ENCODE measurements at regions of chr10 and their contacts with region 1.

Region 1: DNA sequence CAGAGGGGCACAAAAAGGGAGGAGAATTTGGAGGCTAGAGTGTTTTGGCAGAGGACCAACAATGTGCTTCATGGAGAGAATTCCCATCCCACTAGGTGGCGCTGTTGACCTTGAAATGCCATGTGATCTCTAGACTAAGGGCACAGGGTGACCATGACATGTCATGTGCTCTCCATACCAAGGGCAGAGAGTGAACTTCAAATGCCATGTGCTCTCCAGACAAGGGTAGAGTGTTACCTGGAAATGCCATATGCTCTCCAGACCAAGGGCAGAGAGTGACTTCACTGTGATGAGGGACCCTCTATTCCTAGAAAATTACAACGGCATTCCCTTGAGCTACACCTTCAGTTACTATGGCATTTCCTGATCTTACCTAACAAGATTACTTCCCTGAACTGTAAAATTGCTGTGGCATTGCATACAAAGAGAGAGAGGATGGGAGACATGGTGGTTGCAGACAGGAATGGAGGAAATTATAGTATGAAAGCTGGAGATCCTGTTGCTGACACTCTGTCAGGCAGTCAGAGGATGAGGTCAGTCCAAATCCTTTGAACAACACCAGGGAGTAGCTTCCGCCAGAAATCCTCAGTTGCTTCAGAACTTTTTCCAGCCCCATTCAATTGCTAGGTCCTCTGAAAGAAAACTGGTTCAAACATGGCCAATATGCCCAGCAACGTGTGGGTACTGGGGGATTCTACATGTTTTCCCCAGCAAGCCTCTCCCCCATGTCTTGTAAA is 60.9 kb upstream of the ACSM6 start:
- DNase-seq: peak; percentile 45
- ATAC-seq: peak; percentile 99
- H3K4me3 ChIP-seq: no peak overlapping the region
- H3K27ac ChIP-seq: no peak overlapping the region
- H3K4me1 ChIP-seq: no peaks in the 10 kb centered on the region
- H3K27me3 ChIP-seq: no peaks in the 10 kb centered on the region
- CTCF ChIP-seq: peak; percentile 71 to 83 (median 79)
- EP300 ChIP-seq: no peak
- POLR2A ChIP-seq: no peak
- RAD21 ChIP-seq: peak; percentile 86

Region 2: GRCh38 chr10:94500063-94500462 is 633.1 kb before region 1 on chr10:
- CTCF ChIA-PET with region 1: no interaction called
- POLR2A ChIA-PET with region 1: no interaction called
- RAD21 ChIA-PET with region 1: no interaction called
- SMC1A ChIA-PET with region 1: no interaction called
- in situ Hi-C with region 1: no loop called
- intact Hi-C with region 1: no loop called
- DNase-seq: no peak
- ATAC-seq: no peak
- H3K4me3 ChIP-seq: no peak overlapping the region
- H3K27ac ChIP-seq: no peak overlapping the region
- H3K4me1 ChIP-seq: peaks cover 6% of the 10 kb centered on the region
- H3K27me3 ChIP-seq: no peaks in the 10 kb centered on the region
- CTCF ChIP-seq: peak in 2 of 3 experiments; percentile 7 to 20; a peak in 1 of 6 replicates
- EP300 ChIP-seq: no peak
- POLR2A ChIP-seq: no peak
- RAD21 ChIP-seq: 0 out of 2 replicates have a peak, but pooled peaks have one; percentile 18

Region 3: DNA sequence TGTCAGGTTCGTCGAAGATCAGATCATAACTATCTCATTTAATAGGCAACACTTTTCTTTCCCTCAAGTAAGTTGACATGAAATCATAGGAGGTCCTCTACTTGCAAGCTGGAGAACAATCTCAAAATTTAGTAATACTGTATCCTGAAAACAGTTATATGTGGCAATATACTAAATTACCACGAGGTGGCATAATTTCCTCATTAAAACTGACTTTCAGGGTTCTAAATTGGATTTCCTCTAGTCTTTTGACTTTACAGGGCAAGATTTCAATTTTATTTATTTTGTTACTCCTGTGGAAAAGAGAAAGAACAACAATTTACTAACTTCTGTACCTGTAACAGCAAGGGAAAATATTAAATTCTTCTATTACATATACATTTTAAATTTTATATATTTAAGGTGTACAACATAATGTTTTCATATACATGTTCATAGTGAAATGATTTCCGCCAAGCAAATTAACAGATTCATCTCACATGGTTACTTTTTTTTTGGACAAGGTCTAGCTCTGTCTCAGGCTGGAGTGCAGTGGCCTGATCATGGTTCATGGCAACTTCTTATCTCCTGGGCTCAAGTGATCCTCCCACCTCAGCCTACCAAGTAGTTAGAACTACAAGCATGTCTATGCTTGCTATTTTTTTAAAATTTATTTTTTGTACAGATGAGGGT is 503.0 kb before region 1 on chr10:
- CTCF ChIA-PET with region 1: no interaction called
- POLR2A ChIA-PET with region 1: no interaction called
- RAD21 ChIA-PET with region 1: interaction called, 4 read pairs
- SMC1A ChIA-PET with region 1: interaction called, 5 read pairs
- in situ Hi-C with region 1: no loop called
- intact Hi-C with region 1: loop called (anchors 2 kb)
- DNase-seq: no peak
- ATAC-seq: peak; percentile 70
- H3K4me3 ChIP-seq: no peak overlapping the region
- H3K27ac ChIP-seq: no peak overlapping the region
- H3K4me1 ChIP-seq: no peaks in the 10 kb centered on the region
- H3K27me3 ChIP-seq: no peaks in the 10 kb centered on the region
- CTCF ChIP-seq: peak; percentile 27 to 61 (median 45); a peak in 4 of 6 replicates
- EP300 ChIP-seq: no peak
- POLR2A ChIP-seq: no peak
- RAD21 ChIP-seq: peak; percentile 64

Region 4: GRCh38 chr10:95183271-95184230 is 50.4 kb after region 1 on chr10:
- CTCF ChIA-PET with region 1: interaction called, 4 read pairs
- POLR2A ChIA-PET with region 1: no interaction called
- RAD21 ChIA-PET with region 1: interaction called, 4 read pairs
- SMC1A ChIA-PET with region 1: no interaction called
- in situ Hi-C with region 1: no loop called
- intact Hi-C with region 1: loop called (anchors 1 kb)
- DNase-seq: peak; percentile 27
- ATAC-seq: peak; percentile 99
- H3K4me3 ChIP-seq: peak overlapping the region; percentile 69
- H3K27ac ChIP-seq: no peak overlapping the region
- H3K4me1 ChIP-seq: no peaks in the 10 kb centered on the region
- H3K27me3 ChIP-seq: no peaks in the 10 kb centered on the region
- CTCF ChIP-seq: peak; percentile 84 to 98 (median 92)
- EP300 ChIP-seq: 0 out of 4 replicates have a peak, but pooled peaks of 1 of the 2 experiments have one; percentile 17
- POLR2A ChIP-seq: peak; percentile 69
- RAD21 ChIP-seq: peak; percentile 67

Region 5: GRCh38 chr10:95445837-95446486 is 312.8 kb after region 1 on chr10:
- CTCF ChIA-PET with region 1: interaction called, 3 read pairs
- POLR2A ChIA-PET with region 1: no interaction called
- RAD21 ChIA-PET with region 1: no interaction called
- SMC1A ChIA-PET with region 1: no interaction called
- in situ Hi-C with region 1: no loop called
- intact Hi-C with region 1: loop called (anchors 5 kb)
- DNase-seq: no peak
- ATAC-seq: peak; percentile 83
- H3K4me3 ChIP-seq: no peak overlapping the region
- H3K27ac ChIP-seq: no peak overlapping the region
- H3K4me1 ChIP-seq: peaks cover 7% of the 10 kb centered on the region
- H3K27me3 ChIP-seq: no peaks in the 10 kb centered on the region; a peak in 2 of 4 replicates
- CTCF ChIP-seq: peak; percentile 85 to 86 (median 86)
- EP300 ChIP-seq: no peak
- POLR2A ChIP-seq: no peak
- RAD21 ChIP-seq: peak; percentile 77

Region 6: GRCh38 chr10:95601116-95601719 is 468.0 kb after region 1 on chr10:
- CTCF ChIA-PET with region 1: interaction called, 6 read pairs
- POLR2A ChIA-PET with region 1: no interaction called
- RAD21 ChIA-PET with region 1: no interaction called
- SMC1A ChIA-PET with region 1: no interaction called
- in situ Hi-C with region 1: no loop called
- intact Hi-C with region 1: loop called (anchors 1 kb)
- DNase-seq: peak; percentile 5
- ATAC-seq: peak; percentile 94
- H3K4me3 ChIP-seq: no peak overlapping the region
- H3K27ac ChIP-seq: no peak overlapping the region
- H3K4me1 ChIP-seq: no peaks in the 10 kb centered on the region
- H3K27me3 ChIP-seq: peaks cover 0 to 3% of the 10 kb centered on the region in 2 experiments; a peak in 2 of 4 replicates
- CTCF ChIP-seq: peak; percentile 92 to 95 (median 94)
- EP300 ChIP-seq: no peak
- POLR2A ChIP-seq: no peak
- RAD21 ChIP-seq: peak; percentile 95

Measured in GM12878 (cell line).